Cardiac septum (tissue), 1 donor: ENCODE measurements at regions of chr10 and their contacts with region 1.

Region 1: GRCh38 chr10:9209105-9209798 is 1154.8 kb downstream of the GATA3 start:
- DNase-seq: no peak

Region 2: DNA sequence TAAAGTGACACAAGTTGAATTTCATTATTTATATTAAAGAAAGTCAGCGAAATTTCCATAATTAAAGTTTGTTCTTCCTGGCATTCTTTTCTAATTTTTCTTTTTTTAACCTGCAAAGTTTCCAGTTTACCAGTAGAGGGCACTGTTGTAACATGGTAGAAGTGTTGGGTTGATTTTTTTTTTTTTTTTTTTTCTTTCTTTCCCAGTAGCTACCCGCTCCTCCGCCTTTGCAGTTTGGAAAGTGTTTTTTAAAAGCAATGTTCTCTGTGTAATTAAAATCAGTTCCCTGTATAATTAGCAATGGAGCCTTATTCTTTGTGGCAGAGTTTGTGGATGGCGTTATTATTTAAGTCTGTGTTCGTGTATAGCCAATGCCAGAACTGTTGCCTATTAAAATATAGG is 1337.2 kb before region 1 on chr10:
- intact Hi-C with region 1: loop called (anchors 2 kb)
- DNase-seq: no peak